ENCODE measurements at regions of chr15 and their contacts with region 1.

Region 1: GRCh38 chr15:51982013-51982769 is 10.6 kb upstream of the LEO1 start:
- DNase-seq: peak; percentile 89
- H3K4me3 Mint-ChIP-seq: peak overlapping the region; percentile 83
- H3K27ac Mint-ChIP-seq: peak overlapping the region; percentile 93
- H3K4me1 Mint-ChIP-seq: peaks cover 12% of the 10 kb centered on the region
- H3K27me3 Mint-ChIP-seq: no peaks in the 10 kb centered on the region

Region 2: DNA sequence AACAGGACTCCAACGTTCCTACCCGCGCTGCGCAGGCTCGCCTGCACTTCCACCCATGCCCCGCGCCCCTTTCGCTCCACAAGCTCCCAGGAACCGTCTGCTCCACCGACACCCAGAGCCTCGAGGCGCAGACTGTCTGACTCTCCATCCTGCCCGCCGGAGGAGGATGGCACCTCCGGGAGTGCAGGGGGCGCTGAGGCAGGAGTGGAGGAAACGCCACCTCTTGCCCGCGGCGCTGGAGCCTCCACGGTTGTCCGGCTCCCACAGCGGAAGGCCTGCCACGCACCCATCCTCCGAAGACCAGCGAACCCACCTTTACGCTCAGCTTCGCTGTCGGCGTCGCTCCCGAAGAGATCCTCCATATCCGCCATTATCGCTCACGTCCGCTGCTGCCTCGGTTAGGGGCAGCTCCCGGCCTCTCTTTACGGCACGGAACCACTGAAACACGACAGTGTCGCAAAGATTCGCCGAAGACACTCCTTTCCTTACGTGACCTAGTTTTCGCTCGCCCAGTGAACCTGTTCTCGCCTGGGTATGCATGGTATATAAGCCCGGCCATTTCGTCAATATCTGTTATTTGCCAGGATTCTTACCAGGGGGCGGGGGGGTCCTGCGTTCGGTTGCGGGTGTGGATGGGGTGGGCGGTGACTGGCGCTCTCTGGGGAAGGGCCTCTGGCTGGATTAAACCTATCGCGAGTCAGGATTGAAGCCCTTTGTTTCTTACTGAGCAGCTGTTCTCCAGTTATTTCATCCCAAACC is 10.6 kb before region 1 on chr15 and contains the start of gene LEO1:
- intact Hi-C with region 1: loop called (anchors 1 kb)
- DNase-seq: peak; percentile 97
- H3K4me3 Mint-ChIP-seq: peak within 1 kb of the TSS; percentile 87
- H3K27ac Mint-ChIP-seq: peak within 1 kb of the TSS; percentile 94
- H3K4me1 Mint-ChIP-seq: peaks cover 23% of the 10 kb centered on the region
- H3K27me3 Mint-ChIP-seq: peaks cover 2% of the 10 kb centered on the region
- total RNA-seq, gene LEO1: 35.0 and 35.7 TPM in 2 replicates

Region 3: DNA sequence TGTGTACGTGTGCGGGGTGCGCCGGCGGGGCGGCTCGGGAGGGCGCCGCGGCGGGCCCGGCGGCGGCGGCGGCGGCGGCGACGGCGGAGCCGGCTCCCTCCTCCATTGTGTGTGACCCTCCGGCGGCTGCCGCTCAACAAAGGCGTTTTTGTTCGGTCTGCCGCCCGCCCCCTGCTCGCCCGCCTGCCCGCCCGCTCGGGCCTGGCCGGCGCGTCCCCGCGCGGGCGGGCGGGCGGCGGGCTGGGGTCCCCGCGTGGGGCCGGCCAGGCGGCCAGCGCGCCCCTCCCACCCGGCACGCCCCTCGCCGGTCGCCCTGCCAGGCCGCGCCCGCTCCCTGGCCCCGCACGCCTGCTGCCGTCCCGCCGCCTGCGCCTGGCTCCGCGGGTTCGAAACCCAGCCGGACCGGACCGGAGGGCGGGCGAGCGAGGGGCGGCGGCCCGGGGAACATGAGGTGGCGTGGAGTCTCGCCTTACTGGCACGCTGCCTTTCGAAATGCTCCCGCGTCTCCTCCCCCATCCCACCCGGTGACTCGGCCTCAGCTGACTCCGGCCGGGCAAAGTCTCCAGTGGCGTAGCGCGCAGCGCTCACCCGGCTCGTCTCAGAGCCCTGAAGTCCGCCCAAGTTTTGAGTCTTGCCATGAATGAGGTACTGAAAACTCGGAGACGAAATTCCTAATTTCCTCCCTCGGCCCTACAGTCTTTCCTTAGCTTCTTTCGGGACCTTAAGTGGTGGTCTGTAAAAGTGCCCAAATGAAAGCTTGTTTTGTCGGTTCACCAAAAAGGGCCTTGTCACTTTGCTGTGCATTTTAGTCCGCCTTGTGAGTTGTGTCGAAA is 37.4 kb after region 1 on chr15:
- intact Hi-C with region 1: loop called (anchors 5 kb)
- DNase-seq: peak; percentile 91
- H3K4me3 Mint-ChIP-seq: peak overlapping the region; percentile 98
- H3K27ac Mint-ChIP-seq: peak overlapping the region; percentile 100
- H3K4me1 Mint-ChIP-seq: peaks cover 32% of the 10 kb centered on the region
- H3K27me3 Mint-ChIP-seq: peaks cover 10% of the 10 kb centered on the region

Region 4: GRCh38 chr15:52078876-52079700 is 96.9 kb after region 1 on chr15:
- intact Hi-C with region 1: loop called (anchors 1 kb)
- DNase-seq: peak; percentile 94
- H3K4me3 Mint-ChIP-seq: no peak overlapping the region
- H3K27ac Mint-ChIP-seq: no peak overlapping the region
- H3K4me1 Mint-ChIP-seq: peaks cover 24% of the 10 kb centered on the region
- H3K27me3 Mint-ChIP-seq: no peaks in the 10 kb centered on the region

Region 5: DNA sequence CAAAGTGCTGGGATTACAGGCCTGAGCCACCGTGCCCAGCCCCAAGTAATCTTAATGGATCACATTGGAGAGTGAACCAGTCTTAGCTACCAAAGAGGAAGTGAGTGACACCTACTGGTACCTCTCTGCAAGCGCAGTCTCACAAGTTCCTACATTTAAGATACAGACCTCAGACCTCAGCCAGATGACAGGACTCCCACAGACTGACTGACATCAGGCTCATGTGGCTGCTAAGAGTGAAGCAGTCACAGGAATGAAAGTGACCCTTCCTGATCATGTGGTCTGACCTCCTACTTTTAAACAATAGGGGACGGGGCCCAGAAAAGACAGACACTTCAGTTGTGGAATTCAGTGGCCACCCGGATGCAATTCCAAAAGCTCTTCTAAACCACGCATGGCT is 245.3 kb after region 1 on chr15:
- intact Hi-C with region 1: loop called (anchors 1 kb)
- DNase-seq: peak; percentile 90
- H3K4me3 Mint-ChIP-seq: no peak overlapping the region
- H3K27ac Mint-ChIP-seq: no peak overlapping the region
- H3K4me1 Mint-ChIP-seq: peaks cover 10% of the 10 kb centered on the region
- H3K27me3 Mint-ChIP-seq: no peaks in the 10 kb centered on the region